Heart left ventricle (tissue), 16 donors: ENCODE measurements at regions of chr12 and their contacts with region 1.

Region 1: DNA sequence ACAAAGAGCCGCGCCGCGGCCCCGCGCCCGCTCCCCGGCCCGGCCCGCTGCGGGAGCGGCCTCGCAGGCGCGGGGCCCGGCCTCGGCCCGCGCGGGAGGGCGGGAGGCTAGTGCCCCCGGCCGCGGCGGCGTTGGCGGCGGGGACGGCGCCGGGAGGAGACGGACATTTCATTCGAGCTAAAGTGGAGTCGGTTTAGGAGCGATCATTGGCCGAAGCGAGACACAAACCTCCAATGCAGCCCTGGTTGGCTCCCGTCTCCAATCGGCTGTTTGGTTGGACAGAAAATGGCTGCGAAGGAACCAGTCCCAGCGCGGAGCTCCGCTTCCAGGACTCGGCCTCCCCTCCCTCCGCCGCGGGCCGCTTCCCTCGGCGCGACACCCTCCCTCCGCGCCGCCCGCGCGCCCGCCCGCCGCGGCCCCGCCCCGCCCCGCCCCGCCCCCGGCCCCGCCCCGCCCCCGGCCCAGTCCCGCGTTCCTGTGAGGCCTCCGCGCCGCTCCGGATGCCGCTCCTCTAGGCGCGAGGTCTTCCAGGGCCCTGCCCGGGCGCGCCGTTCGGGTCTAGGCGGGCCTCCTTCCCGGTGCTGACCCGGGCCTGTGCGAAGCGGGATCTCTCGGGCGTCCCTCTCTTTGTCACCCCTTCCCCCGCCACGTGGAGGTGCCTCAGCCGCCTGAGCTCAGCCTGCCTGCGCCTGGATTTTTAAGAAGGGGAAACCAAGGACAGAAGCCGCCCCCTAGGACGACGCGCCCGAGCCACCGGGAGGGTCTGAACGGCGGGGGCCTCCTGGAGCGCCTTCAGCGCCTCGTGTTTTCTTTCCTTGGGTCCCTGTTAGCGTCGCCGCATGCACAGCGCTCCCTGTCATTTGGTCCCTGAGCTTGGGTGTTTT is at the start of gene NFYB:
- DNase-seq: peak; percentile 95 to 97 (median 96)
- ATAC-seq: peak; percentile 94 to 97 (median 95)
- H3K4me3 ChIP-seq: peak within 1 kb of the TSS; percentile 53 to 96 (median 81)
- H3K27ac ChIP-seq: peak within 1 kb of the TSS; percentile 82 to 93 (median 89)
- H3K4me1 ChIP-seq: peaks cover 0 to 47% (median 29%) of the 10 kb centered on the region in 12 donors
- H3K27me3 ChIP-seq: no peaks in the 10 kb centered on the region
- CTCF ChIP-seq: no peak
- POLR2A ChIP-seq: peak; percentile 11 to 80
- total RNA-seq, gene NFYB: 20.3 to 58.7 (median 23.8) TPM

Region 2: GRCh38 chr12:103771466-103771865 is 366.7 kb before region 1 on chr12:
- intact Hi-C with region 1: no loop called
- DNase-seq: no peak
- ATAC-seq: peak in 2 of 4 donors; percentile 56 to 64
- H3K4me3 ChIP-seq: no peak overlapping the region
- H3K27ac ChIP-seq: peak overlapping the region in 1 of 12 donors; percentile 30
- H3K4me1 ChIP-seq: peaks cover 0 to 14% (median 0%) of the 10 kb centered on the region in 12 donors
- H3K27me3 ChIP-seq: no peaks in the 10 kb centered on the region
- CTCF ChIP-seq: peak in 9 of 12 donors; percentile 17 to 39 (median 25)
- POLR2A ChIP-seq: no peak

Region 3: DNA sequence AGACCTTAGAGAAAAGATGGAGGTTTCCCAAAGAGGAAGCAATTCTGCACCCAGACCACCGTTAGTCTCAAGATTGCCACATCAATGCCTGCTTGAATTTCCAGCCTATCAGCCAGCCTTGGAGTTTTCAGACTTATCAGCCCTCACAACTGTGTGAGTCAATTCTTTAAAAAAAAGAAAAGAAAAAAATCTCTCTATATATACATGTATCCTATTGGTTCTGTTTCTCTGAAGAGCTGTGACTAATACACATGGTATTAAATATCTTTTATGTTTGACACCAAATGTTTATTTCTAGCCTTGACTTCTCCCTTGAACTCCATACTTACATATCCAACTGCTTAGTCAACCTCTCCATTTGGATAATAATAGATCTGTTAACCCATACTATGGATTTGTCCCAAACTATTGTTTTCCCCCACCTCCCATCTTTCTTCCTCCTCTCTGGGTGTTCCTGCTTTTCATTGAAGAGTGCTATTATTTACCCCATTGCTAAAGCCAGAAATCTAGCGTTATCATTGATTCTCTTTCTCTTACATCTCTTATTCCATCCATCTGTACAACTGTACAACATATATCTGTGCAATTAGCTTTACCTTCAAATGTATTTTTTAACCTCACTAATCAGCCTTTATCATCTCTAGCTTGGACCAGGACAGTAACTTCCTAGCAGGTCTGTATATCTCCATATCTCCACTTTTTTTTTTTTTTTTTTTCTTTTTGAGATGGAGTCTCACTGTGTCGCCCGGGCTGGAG is 142.7 kb after region 1 on chr12:
- intact Hi-C with region 1: loop called in 2 of 10 experiments (anchors 2 to 5 kb)
- DNase-seq: no peak
- ATAC-seq: no peak
- H3K4me3 ChIP-seq: no peak overlapping the region
- H3K27ac ChIP-seq: peak overlapping the region in 1 of 12 donors; percentile 7
- H3K4me1 ChIP-seq: peaks cover 0 to 13% (median 6%) of the 10 kb centered on the region in 12 donors
- H3K27me3 ChIP-seq: no peaks in the 10 kb centered on the region
- CTCF ChIP-seq: no peak
- POLR2A ChIP-seq: no peak

Region 4: GRCh38 chr12:104286538-104287482 is 148.7 kb after region 1 on chr12:
- intact Hi-C with region 1: loop called in 2 of 10 experiments (anchors 2 to 5 kb)
- DNase-seq: peak; percentile 92 to 95 (median 94)
- ATAC-seq: peak; percentile 91 to 94 (median 93)
- H3K4me3 ChIP-seq: peak overlapping the region; percentile 53 to 92 (median 74)
- H3K27ac ChIP-seq: peak overlapping the region; percentile 75 to 97 (median 94)
- H3K4me1 ChIP-seq: peaks cover 0 to 38% (median 28%) of the 10 kb centered on the region in 12 donors
- H3K27me3 ChIP-seq: no peaks in the 10 kb centered on the region
- CTCF ChIP-seq: peak in 1 of 12 donors; percentile 9
- POLR2A ChIP-seq: peak in 1 of 2 donors; percentile 88